ENCODE measurements at regions of chr12 and their contacts with region 1.

Region 1: GRCh38 chr12:52327052-52327829 is 6.0 kb upstream of the KRT83 start:
- DNase-seq: peak; percentile 55 to 90 (median 80)
- ATAC-seq: peak; percentile 97
- H3K4me3 ChIP-seq: no peak overlapping the region
- H3K4me3 Mint-ChIP-seq: no peak overlapping the region
- H3K27ac ChIP-seq: no peak overlapping the region
- H3K27ac Mint-ChIP-seq: no peak overlapping the region
- H3K4me1 ChIP-seq: no peaks in the 10 kb centered on the region
- H3K4me1 Mint-ChIP-seq: peaks cover 5% of the 10 kb centered on the region
- H3K27me3 ChIP-seq: no peaks in the 10 kb centered on the region
- H3K27me3 Mint-ChIP-seq: peaks cover 13% of the 10 kb centered on the region
- CTCF ChIP-seq: peak; percentile 77

Region 2: DNA sequence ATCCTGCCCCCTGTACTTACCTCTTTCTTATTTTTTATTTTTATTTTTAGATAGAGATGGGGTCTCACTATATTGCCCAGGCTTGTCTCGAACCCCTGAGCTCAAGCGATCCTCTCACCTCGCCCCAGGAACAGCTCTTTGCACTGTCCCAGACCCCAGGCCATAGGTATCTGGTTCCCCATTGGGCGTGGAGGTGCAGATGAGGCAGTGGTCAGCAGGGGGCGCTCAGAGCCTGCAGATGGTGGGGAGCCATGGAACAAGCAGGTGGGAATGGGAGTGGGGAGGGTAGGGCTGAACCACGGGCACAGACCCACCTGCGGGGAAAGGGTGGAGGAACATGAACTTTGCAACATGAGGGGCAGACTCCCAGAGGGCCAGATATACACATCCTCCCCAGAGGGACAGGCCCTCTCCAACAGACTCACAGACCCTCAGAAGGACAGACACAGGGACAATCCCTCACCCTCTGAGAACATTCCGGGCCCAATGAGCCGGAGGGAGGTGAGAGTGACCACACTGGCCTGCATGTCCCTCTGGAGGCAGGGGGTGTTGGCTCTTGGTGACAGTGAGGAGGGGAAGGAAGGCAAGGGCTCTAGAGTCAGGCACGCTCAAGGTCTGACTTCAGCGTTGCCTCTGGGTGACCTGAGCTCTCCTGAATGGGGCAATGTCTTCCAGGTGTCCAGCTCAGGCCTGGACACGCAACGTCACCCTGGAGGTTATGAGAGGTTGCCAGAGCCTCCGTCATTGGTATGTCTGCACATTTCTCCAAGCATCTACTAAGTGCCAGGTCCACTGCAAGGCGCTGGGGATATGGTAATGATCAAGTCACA is 170.3 kb before region 1 on chr12:
- CTCF ChIA-PET with region 1: interaction called, 17 read pairs
- POLR2A ChIA-PET with region 1: interaction called, 5 read pairs
- intact Hi-C with region 1: loop called (anchors 1 kb)
- DNase-seq: peak; percentile 53 to 77 (median 73)
- ATAC-seq: peak; percentile 35
- H3K4me3 ChIP-seq: no peak overlapping the region
- H3K4me3 Mint-ChIP-seq: no peak overlapping the region
- H3K27ac ChIP-seq: no peak overlapping the region
- H3K27ac Mint-ChIP-seq: no peak overlapping the region
- H3K4me1 ChIP-seq: peaks cover 33% of the 10 kb centered on the region
- H3K4me1 Mint-ChIP-seq: peaks cover 22% of the 10 kb centered on the region
- H3K27me3 ChIP-seq: no peaks in the 10 kb centered on the region
- H3K27me3 Mint-ChIP-seq: no peaks in the 10 kb centered on the region
- CTCF ChIP-seq: peak; percentile 66

Region 3: DNA sequence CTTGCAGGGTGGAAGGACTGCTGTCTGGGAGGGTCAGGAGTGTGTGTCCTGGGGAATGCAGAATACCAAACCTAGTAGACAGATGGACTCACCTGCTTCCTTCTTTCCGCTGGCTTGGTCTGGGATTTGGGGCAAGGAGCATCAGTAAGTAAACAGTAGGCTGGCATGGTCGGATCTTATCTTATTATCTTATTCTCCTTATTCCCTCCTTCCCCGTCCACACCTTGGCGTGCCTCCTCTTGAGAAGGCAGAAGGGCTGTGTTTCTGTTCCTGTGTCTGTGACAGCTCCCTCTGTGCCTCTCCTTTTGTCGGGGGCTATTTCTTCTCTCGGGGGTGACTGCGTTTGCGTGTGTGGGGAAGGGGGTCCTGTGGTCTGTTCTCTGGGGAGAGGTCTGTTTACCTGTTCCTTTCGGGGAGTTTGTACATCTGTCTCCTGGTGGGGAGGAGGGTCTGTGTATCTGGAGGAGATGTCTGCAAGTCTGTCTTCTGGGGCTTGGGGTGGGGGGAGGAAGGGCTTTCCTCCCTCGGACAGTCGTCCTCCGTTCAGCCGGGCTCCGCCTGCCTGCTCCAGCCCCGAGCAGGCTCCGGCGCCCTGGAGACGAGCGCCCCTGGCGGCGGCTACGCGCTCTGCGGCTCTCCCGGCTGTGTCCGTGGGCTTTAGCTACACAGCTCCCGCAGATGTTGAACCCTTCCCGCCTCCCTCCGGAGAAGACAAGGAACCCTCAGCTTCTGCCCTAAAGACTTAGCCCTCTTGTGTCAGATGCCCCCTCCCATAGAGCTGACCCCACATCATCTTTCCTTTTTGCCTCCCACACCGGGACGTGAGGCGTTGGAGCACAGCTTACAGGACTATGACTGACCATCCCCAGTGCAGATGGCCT is 48.5 kb before region 1 on chr12:
- CTCF ChIA-PET with region 1: interaction called, 18 read pairs
- POLR2A ChIA-PET with region 1: interaction called, 3 read pairs
- intact Hi-C with region 1: no loop called
- DNase-seq: peak; percentile 49 to 84 (median 68)
- ATAC-seq: peak; percentile 82
- H3K4me3 ChIP-seq: no peak overlapping the region
- H3K4me3 Mint-ChIP-seq: no peak overlapping the region
- H3K27ac ChIP-seq: no peak overlapping the region
- H3K27ac Mint-ChIP-seq: no peak overlapping the region
- H3K4me1 ChIP-seq: no peaks in the 10 kb centered on the region
- H3K4me1 Mint-ChIP-seq: peaks cover 6% of the 10 kb centered on the region
- H3K27me3 ChIP-seq: peaks cover 4 to 6% of the 10 kb centered on the region in 2 experiments
- H3K27me3 Mint-ChIP-seq: peaks cover 34% of the 10 kb centered on the region
- CTCF ChIP-seq: peak; percentile 90

Region 4: DNA sequence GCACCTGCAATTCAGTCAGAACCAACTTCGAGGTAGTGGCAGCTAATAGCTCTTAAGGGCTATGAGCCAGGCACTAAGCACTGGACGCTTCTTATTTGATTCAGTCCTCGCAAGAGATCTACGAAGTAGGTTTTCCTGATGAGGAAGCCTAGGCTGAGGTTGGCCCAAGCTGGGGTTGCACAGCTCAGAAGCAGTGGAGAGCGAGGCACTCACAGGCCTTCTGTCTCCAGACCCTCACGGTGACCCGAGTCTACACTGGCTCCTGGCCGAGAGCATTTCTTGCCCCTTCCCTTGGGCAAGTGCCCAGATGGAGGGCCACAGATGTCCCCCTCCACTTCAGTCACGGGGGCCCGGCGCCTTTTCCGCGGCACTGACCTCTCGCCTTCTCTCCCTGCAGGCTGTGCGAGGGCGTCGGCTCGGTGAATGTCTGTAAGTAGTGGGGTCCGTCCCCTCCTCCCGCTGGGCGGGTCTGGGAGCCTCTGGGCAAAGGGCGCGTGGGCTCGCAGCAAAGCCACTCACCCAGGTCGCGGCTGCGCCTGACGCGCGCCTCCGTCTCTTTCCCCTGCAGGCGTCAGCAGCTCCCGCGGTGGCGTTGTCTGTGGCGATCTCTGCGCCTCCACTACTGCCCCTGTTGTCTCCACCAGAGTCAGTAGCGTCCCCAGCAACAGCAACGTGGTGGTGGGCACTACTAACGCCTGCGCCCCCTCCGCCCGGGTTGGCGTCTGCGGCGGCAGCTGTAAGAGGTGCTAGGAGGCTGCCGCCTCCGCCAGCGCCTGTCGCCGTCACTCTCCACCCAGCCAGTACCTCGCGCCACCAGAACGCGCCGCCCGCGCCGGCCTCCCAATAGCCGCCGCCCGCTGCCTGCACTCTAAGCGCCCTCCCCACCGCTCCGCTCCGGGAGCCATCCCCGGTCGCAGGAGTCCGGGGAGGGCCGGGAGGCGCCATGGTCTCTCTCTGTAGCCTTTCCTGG is 19.1 kb before region 1 on chr12:
- CTCF ChIA-PET with region 1: interaction called, 24 read pairs
- POLR2A ChIA-PET with region 1: no interaction called
- intact Hi-C with region 1: no loop called
- DNase-seq: peak in 7 of 9 experiments; percentile 3 to 63 (median 32)
- ATAC-seq: peak; percentile 54
- H3K4me3 ChIP-seq: peak overlapping the region in 1 of 2 experiments; percentile 28
- H3K4me3 Mint-ChIP-seq: no peak overlapping the region
- H3K27ac ChIP-seq: no peak overlapping the region
- H3K27ac Mint-ChIP-seq: peak overlapping the region; percentile 60
- H3K4me1 ChIP-seq: peaks cover 11% of the 10 kb centered on the region
- H3K4me1 Mint-ChIP-seq: peaks cover 17% of the 10 kb centered on the region
- H3K27me3 ChIP-seq: peaks cover 0 to 8% of the 10 kb centered on the region in 2 experiments
- H3K27me3 Mint-ChIP-seq: peaks cover 52% of the 10 kb centered on the region
- CTCF ChIP-seq: no peak

Region 5: DNA sequence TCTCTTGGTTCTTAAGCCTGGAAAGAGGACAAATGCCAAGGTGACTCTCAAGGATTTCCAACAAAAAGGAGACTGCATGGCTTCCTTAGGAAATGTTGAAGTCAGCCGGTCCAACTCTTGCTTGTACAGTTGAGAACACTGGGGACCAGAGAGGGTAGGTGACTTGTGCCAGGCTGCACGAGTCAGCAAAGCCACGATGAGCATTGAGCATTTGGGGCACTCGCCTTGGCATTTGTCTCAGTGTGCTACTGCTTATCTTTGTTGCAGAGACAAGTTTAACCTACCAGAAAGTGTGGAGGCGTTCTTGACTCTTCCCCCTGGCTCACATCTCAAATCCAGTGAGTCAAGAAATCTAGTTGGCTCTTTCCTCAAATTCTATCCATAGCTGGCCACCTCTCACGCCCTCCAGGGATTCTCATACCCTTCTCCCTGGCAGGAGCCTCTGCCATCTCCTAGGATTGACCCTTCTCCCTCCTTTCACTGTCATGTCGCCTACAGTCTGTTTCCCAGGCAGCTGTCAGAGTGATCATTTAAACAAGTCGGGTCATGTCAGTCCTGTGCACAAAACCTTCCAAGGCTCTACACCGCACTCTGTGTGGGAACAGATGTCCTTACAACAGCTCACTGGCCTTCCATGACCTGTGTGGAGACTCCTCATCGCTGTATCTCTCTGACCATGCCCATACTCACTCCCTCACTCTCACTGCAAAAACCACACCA is 11.2 kb after region 1 on chr12:
- CTCF ChIA-PET with region 1: interaction called, 11 read pairs
- POLR2A ChIA-PET with region 1: no interaction called
- intact Hi-C with region 1: no loop called
- DNase-seq: no peak
- ATAC-seq: no peak
- H3K4me3 ChIP-seq: no peak overlapping the region
- H3K4me3 Mint-ChIP-seq: no peak overlapping the region
- H3K27ac ChIP-seq: no peak overlapping the region
- H3K27ac Mint-ChIP-seq: no peak overlapping the region
- H3K4me1 ChIP-seq: no peaks in the 10 kb centered on the region
- H3K4me1 Mint-ChIP-seq: no peaks in the 10 kb centered on the region
- H3K27me3 ChIP-seq: no peaks in the 10 kb centered on the region
- H3K27me3 Mint-ChIP-seq: peaks cover 7% of the 10 kb centered on the region
- CTCF ChIP-seq: no peak

Region 6: DNA sequence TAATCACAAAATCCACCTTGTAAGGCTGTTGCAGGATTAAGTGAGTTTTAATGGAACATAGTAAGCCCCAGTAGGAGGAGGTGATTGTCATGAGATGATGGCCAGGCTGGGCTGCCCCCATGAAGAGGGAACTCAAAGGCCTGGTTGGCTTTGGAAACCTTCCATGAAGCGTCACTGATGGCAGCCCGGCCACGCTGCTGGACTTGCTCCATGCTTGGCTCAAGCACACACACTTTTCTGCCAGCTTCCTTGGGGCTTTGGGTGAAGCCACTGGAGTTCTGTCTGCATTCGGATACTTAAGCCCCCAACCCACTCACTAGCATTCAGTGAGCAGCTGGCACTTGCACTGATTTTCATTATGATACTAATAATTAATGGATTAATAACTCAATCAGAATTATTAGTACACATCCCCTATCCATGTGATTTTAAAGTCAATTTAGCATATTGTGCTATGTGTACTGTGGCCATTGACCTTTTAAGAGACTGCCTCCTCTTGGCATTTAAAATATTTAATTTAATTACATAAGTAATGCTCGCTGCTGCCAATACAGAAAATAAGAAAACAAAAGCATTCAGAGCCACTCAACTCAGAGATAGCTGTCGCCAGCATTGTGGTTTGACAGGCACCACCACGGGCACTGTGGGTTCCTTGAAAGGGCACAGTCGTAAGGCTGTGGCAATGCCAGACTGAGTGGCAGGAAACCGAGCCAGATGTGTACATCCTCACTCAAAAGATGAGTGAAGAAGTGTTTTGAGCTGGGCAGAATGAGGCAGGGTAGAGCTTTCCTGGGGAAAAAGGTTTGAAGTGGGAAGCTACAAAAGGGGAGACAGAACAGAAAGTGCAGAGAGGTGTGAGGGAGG is 24.2 kb after region 1 on chr12:
- CTCF ChIA-PET with region 1: interaction called, 14 read pairs
- POLR2A ChIA-PET with region 1: interaction called, 6 read pairs
- intact Hi-C with region 1: no loop called
- DNase-seq: peak; percentile 57 to 88 (median 71)
- ATAC-seq: peak; percentile 95
- H3K4me3 ChIP-seq: no peak overlapping the region
- H3K4me3 Mint-ChIP-seq: peak overlapping the region; percentile 36
- H3K27ac ChIP-seq: no peak overlapping the region
- H3K27ac Mint-ChIP-seq: peak overlapping the region; percentile 46
- H3K4me1 ChIP-seq: peaks cover 27% of the 10 kb centered on the region
- H3K4me1 Mint-ChIP-seq: peaks cover 31% of the 10 kb centered on the region
- H3K27me3 ChIP-seq: peaks cover 0 to 4% of the 10 kb centered on the region in 2 experiments
- H3K27me3 Mint-ChIP-seq: peaks cover 15% of the 10 kb centered on the region
- CTCF ChIP-seq: no peak

Region 7: DNA sequence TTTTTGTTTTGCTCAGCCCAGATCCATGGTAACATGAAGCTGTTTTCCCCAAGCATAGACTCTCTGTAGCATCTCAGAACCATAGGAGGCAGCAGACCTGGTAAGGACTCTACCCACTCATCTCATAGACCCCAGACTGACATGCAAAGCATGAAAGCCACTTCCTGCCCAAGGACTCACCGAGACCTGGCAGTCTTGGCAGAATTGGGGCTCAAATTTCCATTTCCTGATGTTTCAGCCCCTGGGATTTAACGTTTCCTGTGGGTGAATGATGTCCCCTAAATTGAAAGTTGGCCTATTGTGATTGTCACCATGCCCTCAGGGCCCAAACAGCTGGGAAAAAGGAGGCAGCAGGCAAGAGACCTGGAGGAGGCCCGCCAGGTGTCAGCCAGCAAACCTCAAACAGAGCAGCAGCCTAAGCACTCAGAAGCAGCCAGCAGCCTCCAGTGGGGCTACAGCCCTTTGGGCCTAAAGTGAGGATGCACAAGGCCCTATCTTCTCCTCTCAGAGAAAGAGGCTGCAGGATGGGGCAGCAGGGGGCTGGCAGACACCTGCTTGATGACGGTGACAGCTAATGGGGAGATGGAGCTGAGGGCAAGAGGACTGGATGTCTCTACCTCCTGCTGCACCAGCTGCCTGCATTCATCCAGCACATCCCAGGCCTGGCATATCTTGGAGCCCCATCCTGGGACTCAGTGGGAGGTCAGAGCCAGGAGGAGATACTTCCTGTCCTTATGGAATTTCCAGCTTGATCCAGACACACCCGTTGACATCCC is 31.5 kb after region 1 on chr12:
- CTCF ChIA-PET with region 1: interaction called, 14 read pairs
- POLR2A ChIA-PET with region 1: no interaction called
- intact Hi-C with region 1: no loop called
- DNase-seq: peak in 8 of 9 experiments; percentile 4 to 77 (median 41)
- ATAC-seq: peak; percentile 93
- H3K4me3 ChIP-seq: no peak overlapping the region
- H3K4me3 Mint-ChIP-seq: peak overlapping the region; percentile 2
- H3K27ac ChIP-seq: no peak overlapping the region
- H3K27ac Mint-ChIP-seq: peak overlapping the region; percentile 67
- H3K4me1 ChIP-seq: peaks cover 26% of the 10 kb centered on the region
- H3K4me1 Mint-ChIP-seq: peaks cover 31% of the 10 kb centered on the region
- H3K27me3 ChIP-seq: peaks cover 0 to 4% of the 10 kb centered on the region in 2 experiments
- H3K27me3 Mint-ChIP-seq: peaks cover 16% of the 10 kb centered on the region
- CTCF ChIP-seq: peak; percentile 33